HAP-1 (cell line): ENCODE measurements at regions of chr12 and their contacts with region 1.

Region 1: GRCh38 chr12:79547735-79548609 is 142.8 kb downstream of the PAWR start:
- DNase-seq: peak; percentile 47 to 69
- H3K4me3 ChIP-seq: no peak overlapping the region
- H3K4me1 ChIP-seq: peaks cover 19% of the 10 kb centered on the region
- H3K27me3 ChIP-seq: no peaks in the 10 kb centered on the region

Region 2: GRCh38 chr12:79233341-79233781 is 314.6 kb before region 1 on chr12:
- in situ Hi-C with region 1: no loop called
- DNase-seq: peak in 1 of 2 experiments; percentile 10
- H3K4me3 ChIP-seq: no peak overlapping the region
- H3K4me1 ChIP-seq: no peaks in the 10 kb centered on the region
- H3K27me3 ChIP-seq: no peaks in the 10 kb centered on the region

Region 3: DNA sequence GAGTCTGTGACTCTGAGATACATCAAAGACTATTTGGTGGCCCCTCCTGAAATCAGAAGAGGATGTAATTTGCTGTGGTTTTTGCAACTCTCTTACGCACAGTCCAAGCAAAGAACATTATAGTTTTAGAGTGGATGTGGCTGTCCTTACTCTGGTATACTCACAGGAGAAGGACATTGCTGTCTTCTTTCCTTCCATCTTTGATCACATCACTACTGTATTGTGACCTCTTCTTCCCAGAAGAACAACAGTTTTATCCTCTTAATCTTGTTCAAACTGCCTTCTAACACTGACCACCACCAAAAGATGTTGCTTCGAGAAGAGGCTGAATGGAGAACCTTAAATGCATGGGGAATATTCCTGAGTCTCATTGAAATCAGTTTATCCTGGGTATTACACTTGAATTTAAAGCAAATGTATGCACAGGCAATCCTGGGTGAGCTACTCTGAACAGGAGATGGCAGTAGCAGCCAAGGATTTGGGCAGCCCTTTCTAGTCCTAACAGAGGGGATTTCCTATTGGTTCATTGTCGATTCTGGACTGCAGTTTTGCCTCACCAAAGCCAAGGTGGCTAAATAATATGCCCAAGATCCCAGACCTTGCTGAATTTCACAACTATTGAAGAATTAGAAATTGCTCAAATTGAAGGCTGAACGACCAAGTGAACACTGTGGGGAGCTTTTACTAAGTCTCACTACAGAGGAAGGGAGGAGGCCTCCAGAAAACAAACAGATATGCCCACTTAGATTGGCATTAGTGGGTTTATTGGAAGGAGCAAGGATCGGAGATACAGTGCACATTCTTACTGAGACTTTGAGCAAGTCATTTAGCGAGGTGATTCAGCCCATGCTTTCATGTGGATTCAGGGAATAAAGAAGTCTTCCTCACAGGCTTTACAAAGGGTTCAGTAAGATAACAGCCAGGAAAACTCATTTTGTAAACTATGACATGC is 140.0 kb before region 1 on chr12:
- in situ Hi-C with region 1: loop called (anchors 25 kb)
- DNase-seq: peak; percentile 79 to 80
- H3K4me3 ChIP-seq: no peak overlapping the region
- H3K4me1 ChIP-seq: peaks cover 2% of the 10 kb centered on the region; the same call in 1 of the 2 replicates
- H3K27me3 ChIP-seq: no peaks in the 10 kb centered on the region

Region 4: GRCh38 chr12:79933532-79934264 is 385.7 kb after region 1 on chr12:
- in situ Hi-C with region 1: no loop called
- DNase-seq: peak; percentile 11 to 25
- H3K4me3 ChIP-seq: peak overlapping the region; percentile 88
- H3K4me1 ChIP-seq: peaks cover 27% of the 10 kb centered on the region
- H3K27me3 ChIP-seq: no peaks in the 10 kb centered on the region